HepG2 (cell line): ENCODE measurements at regions of chr10 and their contacts with region 1.

Region 1: GRCh38 chr10:110305767-110306451 is 1.2 kb upstream of the SMNDC1 start:
- DNase-seq: peak; percentile 74
- ATAC-seq: peak; percentile 51
- H3K4me3 ChIP-seq: peak overlapping the region in 2 of 3 experiments; percentile 93 to 99; a peak in 3 of 6 replicates
- H3K27ac ChIP-seq: peak overlapping the region; percentile 85
- H3K4me1 ChIP-seq: peaks cover 32% of the 10 kb centered on the region
- H3K27me3 ChIP-seq: no peaks in the 10 kb centered on the region; a peak in 1 of 5 replicates
- CTCF ChIP-seq: peak; percentile 69
- EP300 ChIP-seq: no peak
- POLR2A ChIP-seq: no peak
- RAD21 ChIP-seq: 0 out of 2 replicates have a peak, but pooled peaks have one; percentile 22

Region 2: GRCh38 chr10:110354322-110354766 is 48.4 kb after region 1 on chr10:
- CTCF ChIA-PET with region 1: no interaction called
- POLR2A ChIA-PET with region 1: no interaction called
- in situ Hi-C with region 1: no loop called
- intact Hi-C with region 1: loop called (anchors 2 kb)
- DNase-seq: peak; percentile 41
- ATAC-seq: peak; percentile 90
- H3K4me3 ChIP-seq: no peak overlapping the region
- H3K27ac ChIP-seq: no peak overlapping the region
- H3K4me1 ChIP-seq: peaks cover 14% of the 10 kb centered on the region
- H3K27me3 ChIP-seq: peaks cover 0 to 33% of the 10 kb centered on the region in 2 experiments; a peak in 2 of 5 replicates
- CTCF ChIP-seq: peak; percentile 69
- EP300 ChIP-seq: no peak
- POLR2A ChIP-seq: no peak
- RAD21 ChIP-seq: peak; percentile 66